ENCODE measurements at regions of chr15 and their contacts with region 1.

Region 1: DNA sequence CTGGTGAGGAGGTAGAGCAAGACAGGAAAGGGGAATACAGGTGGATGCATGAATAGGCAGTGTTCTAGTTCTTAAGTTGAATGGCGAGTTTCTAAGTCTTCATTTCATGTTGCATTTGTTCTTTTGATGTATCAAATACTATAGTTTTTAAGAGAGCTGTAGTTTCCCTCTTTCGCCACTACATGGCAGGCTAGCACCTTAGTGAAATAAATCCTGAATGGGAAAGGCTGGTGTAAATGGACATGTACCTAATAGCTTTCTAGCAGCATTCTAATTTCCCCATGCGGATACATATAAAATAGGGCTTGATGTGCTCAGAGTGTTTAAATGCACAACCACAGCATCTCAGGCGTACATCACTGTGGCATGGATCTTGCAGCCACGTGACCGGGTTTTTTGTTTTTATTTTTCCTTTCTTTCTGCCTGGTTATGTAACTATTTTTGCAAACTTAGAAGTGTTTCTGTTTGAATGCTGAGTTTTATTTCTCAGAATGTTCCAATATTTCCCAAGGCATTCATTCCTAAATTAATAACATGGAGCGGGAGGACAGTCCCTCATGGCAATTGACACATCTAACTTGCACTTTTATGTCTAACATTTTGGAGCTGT is 23.5 kb upstream of the CLN6 start:
- DNase-seq: peak; percentile 53
- ATAC-seq: peak; percentile 51
- H3K4me3 Mint-ChIP-seq: no peak overlapping the region
- H3K27ac Mint-ChIP-seq: no peak overlapping the region
- H3K4me1 Mint-ChIP-seq: peaks cover 2% of the 10 kb centered on the region
- H3K27me3 Mint-ChIP-seq: no peaks in the 10 kb centered on the region

Region 2: DNA sequence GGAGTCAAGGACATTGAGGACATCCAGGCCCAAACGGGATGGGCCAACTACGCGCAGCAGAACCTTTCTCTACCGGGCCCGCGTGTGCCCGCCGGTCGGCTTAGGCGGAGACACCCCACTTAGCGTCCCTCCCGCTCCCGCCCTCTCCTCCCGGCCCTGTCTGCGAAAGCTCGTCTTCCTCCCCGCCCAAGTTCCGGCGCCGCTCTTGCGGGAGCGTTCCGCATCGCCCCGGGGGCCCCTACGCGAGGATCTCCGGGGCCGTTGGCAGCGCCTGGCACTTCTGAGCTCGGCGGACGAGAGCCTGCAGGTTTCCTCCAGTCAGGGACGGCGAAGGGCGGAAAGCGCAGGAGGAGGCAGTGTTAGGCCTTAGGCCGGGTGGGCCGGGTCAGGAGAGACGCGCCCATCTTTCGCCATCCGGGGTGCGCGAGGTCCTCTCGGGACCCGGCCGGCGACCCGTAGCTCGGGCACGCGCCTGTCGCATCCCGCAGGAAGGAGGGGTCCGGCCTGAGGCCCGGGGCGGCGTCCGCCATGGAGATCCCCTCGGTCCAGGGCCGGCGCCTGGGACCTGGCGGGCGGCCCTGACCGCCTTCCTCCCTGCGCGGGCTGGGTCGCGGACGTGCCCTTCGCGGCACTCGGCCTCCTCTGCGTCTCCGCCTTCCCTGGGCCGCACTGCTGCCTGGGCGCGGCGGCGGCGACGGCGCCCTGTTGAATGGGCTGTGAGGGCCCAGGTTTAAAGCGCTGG is 24.7 kb after region 1 on chr15 and contains the start of gene FEM1B:
- CTCF ChIA-PET with region 1: interaction called, 9 read pairs
- POLR2A ChIA-PET with region 1: interaction called, 3 read pairs
- intact Hi-C with region 1: loop called in 1 of 2 experiments (anchors 1 kb)
- DNase-seq: peak; percentile 94
- ATAC-seq: peak; percentile 79
- H3K4me3 Mint-ChIP-seq: peak within 1 kb of the TSS; percentile 99
- H3K27ac Mint-ChIP-seq: peak within 1 kb of the TSS; percentile 99
- H3K4me1 Mint-ChIP-seq: peaks cover 43% of the 10 kb centered on the region
- H3K27me3 Mint-ChIP-seq: no peaks in the 10 kb centered on the region
- total RNA-seq, gene FEM1B: 41.1 to 50.0 TPM

Region 3: DNA sequence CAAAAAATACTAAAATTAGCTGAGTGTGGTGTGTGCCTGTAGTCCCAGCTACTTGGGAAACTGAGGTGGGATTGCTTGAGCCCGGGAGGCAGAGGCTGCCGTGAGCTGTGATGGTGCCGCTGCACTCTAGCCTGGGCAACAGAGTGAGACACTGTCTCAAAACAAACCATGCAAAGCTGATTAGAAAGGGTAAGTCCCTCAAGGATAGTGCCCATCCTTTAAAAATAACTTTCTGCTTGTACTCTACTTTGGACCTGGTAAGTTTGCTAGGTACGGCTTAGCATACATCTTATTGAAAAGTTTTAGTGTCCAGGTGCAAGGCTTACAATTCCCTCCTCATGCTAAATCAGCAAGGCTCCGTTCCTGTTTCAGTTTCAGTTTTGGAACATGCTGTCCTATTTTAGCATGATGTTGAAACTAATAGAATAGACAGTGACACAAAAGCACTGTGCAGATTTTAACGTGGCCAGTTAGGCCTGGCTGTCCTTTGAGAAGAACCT is 45.9 kb after region 1 on chr15:
- CTCF ChIA-PET with region 1: interaction called, 53 read pairs
- POLR2A ChIA-PET with region 1: no interaction called
- intact Hi-C with region 1: loop called in 1 of 2 experiments (anchors 2 kb)
- DNase-seq: peak; percentile 20
- ATAC-seq: peak; percentile 84
- H3K4me3 Mint-ChIP-seq: peak overlapping the region; percentile 46
- H3K27ac Mint-ChIP-seq: peak overlapping the region; percentile 72
- H3K4me1 Mint-ChIP-seq: peaks cover 35% of the 10 kb centered on the region
- H3K27me3 Mint-ChIP-seq: no peaks in the 10 kb centered on the region

Region 4: DNA sequence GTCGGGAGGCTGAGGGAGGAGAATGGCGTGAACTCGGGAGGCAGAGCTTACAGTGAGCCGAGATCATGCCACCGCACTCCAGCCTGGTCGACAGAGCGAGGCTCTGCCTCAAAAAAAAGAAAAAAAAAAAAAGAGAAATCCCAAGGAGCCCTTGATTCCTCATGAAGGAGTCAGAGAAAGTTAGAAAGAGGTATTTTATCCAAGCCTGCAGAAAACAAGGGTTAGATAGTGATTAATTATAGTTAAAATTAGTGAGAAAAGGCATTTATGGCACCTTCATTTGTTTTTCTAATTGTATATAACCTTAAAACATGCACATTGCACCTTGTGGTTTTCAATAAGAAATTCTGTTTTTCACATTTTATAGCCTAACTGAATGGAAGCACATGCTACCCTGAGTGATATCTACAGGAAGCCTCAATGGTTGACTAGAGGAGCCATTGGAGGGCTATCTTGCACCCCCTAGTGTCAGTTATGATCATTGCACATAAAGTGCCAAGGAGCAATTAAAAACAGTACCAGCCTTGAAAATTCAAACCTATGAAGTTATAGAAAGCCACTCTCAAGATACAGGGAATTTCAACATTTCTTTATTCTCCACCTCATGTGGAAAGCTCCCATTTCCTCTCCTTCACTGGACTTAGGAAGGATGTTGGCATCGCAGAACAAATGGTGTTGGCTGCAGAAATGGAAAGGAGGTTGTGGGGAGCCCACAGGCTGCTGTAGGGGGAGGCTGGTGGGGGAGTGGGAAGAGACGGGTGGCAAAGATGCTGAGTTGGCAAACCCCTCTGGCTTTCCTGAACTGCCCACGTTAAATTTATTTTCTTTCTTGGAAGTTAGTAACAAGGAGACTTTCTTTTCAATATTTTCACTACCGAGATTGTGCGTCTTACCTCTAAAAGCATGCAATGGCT is 130.4 kb after region 1 on chr15:
- CTCF ChIA-PET with region 1: interaction called, 16 read pairs
- POLR2A ChIA-PET with region 1: no interaction called
- intact Hi-C with region 1: loop called (anchors 1 kb)
- DNase-seq: peak; percentile 64
- ATAC-seq: peak; percentile 82
- H3K4me3 Mint-ChIP-seq: no peak overlapping the region
- H3K27ac Mint-ChIP-seq: no peak overlapping the region
- H3K4me1 Mint-ChIP-seq: peaks cover 14% of the 10 kb centered on the region
- H3K27me3 Mint-ChIP-seq: no peaks in the 10 kb centered on the region

Region 5: GRCh38 chr15:68672781-68673205 is 419.8 kb after region 1 on chr15:
- CTCF ChIA-PET with region 1: no interaction called
- POLR2A ChIA-PET with region 1: no interaction called
- intact Hi-C with region 1: loop called in 1 of 2 experiments (anchors 10 kb)
- DNase-seq: no peak
- ATAC-seq: no peak
- H3K4me3 Mint-ChIP-seq: no peak overlapping the region
- H3K27ac Mint-ChIP-seq: no peak overlapping the region
- H3K4me1 Mint-ChIP-seq: peaks cover 4% of the 10 kb centered on the region
- H3K27me3 Mint-ChIP-seq: peaks cover 9% of the 10 kb centered on the region

Measured in activated CD4-positive, alpha-beta T cell treated with anti-CD3 and anti-CD28 coated beads for 36 hours (primary cell).